ENCODE measurements at regions of chr1 and their contacts with region 1.

Region 1: GRCh38 chr1:229258031-229258756 is 12.7 kb upstream of the RAB4A start:
- DNase-seq: peak; percentile 69
- H3K4me3 Mint-ChIP-seq: no peak overlapping the region
- H3K27ac Mint-ChIP-seq: no peak overlapping the region
- H3K4me1 Mint-ChIP-seq: peaks cover 29% of the 10 kb centered on the region
- H3K27me3 Mint-ChIP-seq: no peaks in the 10 kb centered on the region

Region 2: DNA sequence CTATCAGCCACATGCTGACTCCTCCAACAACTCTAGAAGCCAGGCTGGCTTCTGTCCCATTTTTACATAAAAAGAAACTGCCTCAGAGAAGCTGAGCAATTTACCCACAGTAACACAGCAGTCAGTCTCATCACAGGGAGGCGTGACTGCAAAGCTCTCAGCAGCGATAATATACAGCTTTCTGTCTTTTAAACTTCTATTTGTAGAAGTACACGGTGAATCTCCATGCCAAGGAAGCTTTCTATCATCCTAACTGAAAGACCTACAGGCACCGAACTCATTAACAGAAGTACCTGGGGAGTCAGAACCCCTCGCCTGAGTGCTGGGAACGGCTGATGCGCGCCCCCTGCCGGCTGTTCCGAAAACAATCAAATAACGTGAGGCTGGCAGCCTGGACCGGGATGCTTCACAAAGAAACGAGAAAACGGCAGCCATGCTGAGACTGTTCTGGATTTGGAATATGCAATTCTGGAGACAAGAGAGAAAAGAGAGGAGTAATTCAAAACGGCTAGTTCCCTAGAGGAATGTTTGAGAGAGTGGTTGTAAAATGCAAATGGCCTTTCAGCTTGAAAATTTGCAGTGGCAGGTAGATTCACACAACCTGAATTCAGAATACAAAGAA is 30.8 kb before region 1 on chr1:
- CTCF ChIA-PET with region 1: interaction called, 12 read pairs
- POLR2A ChIA-PET with region 1: no interaction called
- intact Hi-C with region 1: no loop called
- DNase-seq: peak; percentile 85
- H3K4me3 Mint-ChIP-seq: no peak overlapping the region
- H3K27ac Mint-ChIP-seq: no peak overlapping the region
- H3K4me1 Mint-ChIP-seq: peaks cover 4% of the 10 kb centered on the region
- H3K27me3 Mint-ChIP-seq: no peaks in the 10 kb centered on the region

Region 3: DNA sequence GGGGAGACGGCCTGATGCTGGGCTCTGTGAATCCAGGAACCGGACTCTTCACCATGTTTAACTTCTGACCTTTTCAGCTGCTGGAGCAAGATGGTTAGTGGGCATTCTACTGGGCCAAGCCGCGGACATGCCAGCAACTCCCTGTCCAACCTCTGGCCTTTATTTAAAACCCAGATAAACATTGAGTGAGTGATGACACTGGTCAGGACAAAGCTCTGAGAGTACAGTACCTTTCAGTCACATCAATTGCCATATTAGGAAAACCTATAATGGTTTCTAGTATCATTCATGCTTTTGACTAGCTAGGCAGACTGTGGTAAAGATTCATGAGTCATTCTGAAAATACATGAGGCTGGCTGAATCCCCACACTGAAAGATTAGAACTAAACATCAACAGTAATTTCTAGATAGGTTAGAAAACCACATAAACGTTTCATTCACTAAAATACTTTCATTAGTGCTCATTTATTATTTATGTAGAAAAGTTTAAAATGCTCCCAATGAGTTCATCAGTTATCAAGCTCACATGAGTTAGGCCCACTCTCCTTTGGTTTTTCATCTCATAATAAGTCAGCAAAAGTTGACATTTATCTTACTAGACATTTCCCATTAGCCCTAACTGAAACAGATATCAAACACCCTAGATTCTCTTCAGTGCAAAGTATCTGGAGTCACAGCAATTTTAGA is 182.8 kb after region 1 on chr1:
- CTCF ChIA-PET with region 1: interaction called, 13 read pairs
- POLR2A ChIA-PET with region 1: interaction called, 4 read pairs
- intact Hi-C with region 1: loop called (anchors 1 kb)
- DNase-seq: no peak
- H3K4me3 Mint-ChIP-seq: no peak overlapping the region
- H3K27ac Mint-ChIP-seq: peak overlapping the region; percentile 56
- H3K4me1 Mint-ChIP-seq: peaks cover 22% of the 10 kb centered on the region
- H3K27me3 Mint-ChIP-seq: peaks cover 17% of the 10 kb centered on the region

Region 4: DNA sequence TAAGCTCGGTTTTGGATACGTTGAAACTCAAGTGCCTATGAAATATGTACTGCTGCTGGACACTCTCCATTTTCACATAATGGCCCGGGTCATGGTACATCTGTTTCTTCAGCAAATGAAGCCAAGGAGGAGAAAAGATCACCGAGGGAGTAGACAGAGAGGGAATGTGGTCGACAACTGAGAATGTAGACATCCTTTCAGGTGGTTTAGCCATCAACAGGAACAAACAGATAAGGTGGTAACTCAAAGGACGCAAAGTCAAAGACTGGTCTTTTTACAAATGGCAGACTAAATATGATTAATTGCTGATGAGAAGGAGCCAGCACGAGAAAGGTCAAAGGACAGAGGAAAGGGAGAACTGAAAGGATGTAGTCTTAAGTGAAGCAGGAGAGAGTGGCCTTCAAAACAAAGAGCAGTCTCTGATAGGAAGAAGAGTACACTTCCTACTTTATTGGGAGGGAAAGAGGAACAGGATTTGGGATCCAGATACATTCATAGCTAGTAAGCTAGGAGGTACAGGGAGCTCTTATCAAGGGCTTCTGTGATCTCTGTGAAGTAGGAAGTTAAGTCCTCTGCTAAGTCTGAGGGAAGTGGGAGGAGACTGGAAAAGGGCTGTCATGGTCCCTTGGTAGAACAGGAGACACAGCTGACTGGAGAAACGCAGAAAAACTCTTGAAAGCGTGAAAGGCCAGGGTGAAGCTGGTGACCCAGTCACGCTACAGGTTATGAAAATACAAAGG is 221.6 kb after region 1 on chr1:
- CTCF ChIA-PET with region 1: interaction called, 123 read pairs
- POLR2A ChIA-PET with region 1: interaction called, 3 read pairs
- intact Hi-C with region 1: loop called (anchors 1 kb)
- DNase-seq: no peak
- H3K4me3 Mint-ChIP-seq: no peak overlapping the region
- H3K27ac Mint-ChIP-seq: no peak overlapping the region
- H3K4me1 Mint-ChIP-seq: peaks cover 14% of the 10 kb centered on the region
- H3K27me3 Mint-ChIP-seq: no peaks in the 10 kb centered on the region

Region 5: GRCh38 chr1:229514578-229515275 is 256.5 kb after region 1 on chr1:
- CTCF ChIA-PET with region 1: interaction called, 26 read pairs
- POLR2A ChIA-PET with region 1: no interaction called
- intact Hi-C with region 1: loop called (anchors 1 kb)
- DNase-seq: peak; percentile 70
- H3K4me3 Mint-ChIP-seq: no peak overlapping the region
- H3K27ac Mint-ChIP-seq: no peak overlapping the region
- H3K4me1 Mint-ChIP-seq: peaks cover 6% of the 10 kb centered on the region
- H3K27me3 Mint-ChIP-seq: no peaks in the 10 kb centered on the region

Region 6: GRCh38 chr1:230310381-230311163 is 1052.4 kb after region 1 on chr1:
- CTCF ChIA-PET with region 1: no interaction called
- POLR2A ChIA-PET with region 1: no interaction called
- intact Hi-C with region 1: loop called (anchors 1 kb)
- DNase-seq: peak; percentile 77
- H3K4me3 Mint-ChIP-seq: no peak overlapping the region
- H3K27ac Mint-ChIP-seq: no peak overlapping the region
- H3K4me1 Mint-ChIP-seq: peaks cover 14% of the 10 kb centered on the region
- H3K27me3 Mint-ChIP-seq: peaks cover 6% of the 10 kb centered on the region

Region 7: DNA sequence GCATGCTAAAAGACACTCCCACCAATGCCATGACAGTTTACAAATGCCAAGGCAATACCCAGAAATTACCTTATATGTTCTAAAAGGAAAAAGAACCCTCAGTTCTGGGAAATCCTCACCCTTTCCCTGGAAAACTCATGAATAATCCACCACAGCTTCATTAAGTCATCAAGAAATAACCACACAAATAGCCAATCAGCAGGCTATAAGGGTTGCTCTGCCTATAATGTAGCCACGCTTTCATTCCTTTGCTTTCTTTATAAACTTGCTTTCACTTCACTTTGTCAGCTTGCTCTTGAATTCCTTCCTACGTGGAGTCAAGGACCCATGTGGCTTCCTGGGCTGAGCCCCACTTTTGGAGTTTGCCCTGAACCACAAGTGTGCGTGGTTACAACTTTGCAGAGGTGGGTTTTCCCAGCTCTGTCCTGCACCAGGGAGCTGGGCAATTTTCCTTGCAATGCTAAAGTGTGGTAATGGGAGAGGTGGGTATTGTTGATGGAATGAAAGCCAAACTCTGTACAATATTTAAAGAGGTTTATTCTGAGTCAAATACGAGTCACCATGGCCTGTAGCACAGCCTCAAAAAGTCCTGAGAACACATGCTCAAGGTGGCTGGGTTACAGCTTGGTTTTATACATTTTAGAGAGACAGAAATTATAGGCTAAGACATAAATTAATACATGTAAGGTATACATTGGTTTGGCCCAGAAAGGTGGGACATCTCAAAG is 1341.9 kb after region 1 on chr1:
- CTCF ChIA-PET with region 1: no interaction called
- POLR2A ChIA-PET with region 1: no interaction called
- intact Hi-C with region 1: no loop called
- DNase-seq: no peak
- H3K4me3 Mint-ChIP-seq: no peak overlapping the region
- H3K27ac Mint-ChIP-seq: no peak overlapping the region
- H3K4me1 Mint-ChIP-seq: no peaks in the 10 kb centered on the region
- H3K27me3 Mint-ChIP-seq: peaks cover 19% of the 10 kb centered on the region

Measured in activated CD4-positive, alpha-beta memory T cell treated with anti-CD3 and anti-CD28 coated beads for 36 hours (primary cell).